ENCODE measurements at regions of chr11 and their contacts with region 1.

Region 1: GRCh38 chr11:73647459-73648100 is 1.2 kb downstream of the PLEKHB1 start:
- DNase-seq: peak; percentile 95
- H3K4me3 Mint-ChIP-seq: peak overlapping the region; percentile 79
- H3K27ac Mint-ChIP-seq: peak overlapping the region; percentile 23
- H3K4me1 Mint-ChIP-seq: peaks cover 7% of the 10 kb centered on the region
- H3K27me3 Mint-ChIP-seq: no peaks in the 10 kb centered on the region

Region 2: GRCh38 chr11:73597956-73598718 is 49.4 kb before region 1 on chr11 and contains the start of gene FAM168A:
- CTCF ChIA-PET with region 1: no interaction called
- POLR2A ChIA-PET with region 1: no interaction called
- intact Hi-C with region 1: loop called (anchors 1 kb)
- DNase-seq: peak; percentile 95
- H3K4me3 Mint-ChIP-seq: peak within 1 kb of the TSS; percentile 86
- H3K27ac Mint-ChIP-seq: peak within 1 kb of the TSS; percentile 84
- H3K4me1 Mint-ChIP-seq: peaks cover 29% of the 10 kb centered on the region
- H3K27me3 Mint-ChIP-seq: no peaks in the 10 kb centered on the region
- total RNA-seq, gene FAM168A: 12.2 TPM

Region 3: GRCh38 chr11:73633999-73634398 is 13.6 kb before region 1 on chr11:
- CTCF ChIA-PET with region 1: no interaction called
- POLR2A ChIA-PET with region 1: no interaction called
- intact Hi-C with region 1: no loop called
- DNase-seq: no peak
- H3K4me3 Mint-ChIP-seq: no peak overlapping the region
- H3K27ac Mint-ChIP-seq: no peak overlapping the region
- H3K4me1 Mint-ChIP-seq: peaks cover 6% of the 10 kb centered on the region
- H3K27me3 Mint-ChIP-seq: no peaks in the 10 kb centered on the region